Posterior vena cava (tissue), 2 donors: ENCODE measurements at regions of chr4 and their contacts with region 1.

Region 1: DNA sequence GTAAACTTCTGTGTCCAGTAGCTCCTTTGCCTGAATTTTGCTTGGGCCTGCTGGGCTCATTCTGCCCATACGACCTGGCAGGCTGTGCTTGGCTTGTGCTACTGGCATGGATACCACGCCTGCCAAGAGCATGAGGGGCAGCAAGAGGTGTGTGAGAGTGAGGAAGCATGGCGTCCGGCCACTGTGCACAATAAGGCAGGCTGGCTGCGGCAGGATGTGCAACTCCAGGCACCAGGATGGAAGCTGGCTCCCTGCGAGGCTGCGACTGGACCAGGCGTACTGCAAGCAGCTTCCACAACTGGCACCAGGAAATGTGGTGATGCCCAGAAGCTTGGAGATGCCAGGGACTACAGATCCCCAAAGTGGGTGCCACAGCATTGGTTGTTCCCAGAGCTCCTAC is 709.3 kb downstream of the PCDH18 start:
- DNase-seq: no peak

Region 2: DNA sequence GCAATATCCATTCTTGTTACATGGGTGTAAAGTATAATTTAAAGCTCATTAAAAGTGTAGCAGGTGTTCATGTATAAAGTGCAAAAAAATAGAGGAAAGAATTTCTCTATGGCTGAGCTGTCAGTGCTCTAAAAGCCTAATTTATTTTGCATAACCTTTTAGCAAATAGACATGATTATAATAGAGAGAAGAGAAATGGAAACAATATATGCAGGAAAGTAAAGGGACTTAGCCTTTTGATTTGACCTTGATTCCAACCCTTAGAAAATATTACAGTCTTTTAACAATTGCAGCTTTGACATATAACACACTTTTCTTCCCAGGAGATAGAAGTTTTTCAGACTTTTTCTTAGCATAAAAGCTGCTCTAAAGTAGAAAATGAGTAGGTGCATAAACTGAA is 269.0 kb before region 1 on chr4:
- intact Hi-C with region 1: loop called in 1 of 2 experiments (anchors 5 kb)
- DNase-seq: no peak